Activated CD4-positive, alpha-beta memory T cell treated with anti-CD3 and anti-CD28 coated beads for 36 hours (primary cell): ENCODE measurements at regions of chr13 and their contacts with region 1.

Region 1: DNA sequence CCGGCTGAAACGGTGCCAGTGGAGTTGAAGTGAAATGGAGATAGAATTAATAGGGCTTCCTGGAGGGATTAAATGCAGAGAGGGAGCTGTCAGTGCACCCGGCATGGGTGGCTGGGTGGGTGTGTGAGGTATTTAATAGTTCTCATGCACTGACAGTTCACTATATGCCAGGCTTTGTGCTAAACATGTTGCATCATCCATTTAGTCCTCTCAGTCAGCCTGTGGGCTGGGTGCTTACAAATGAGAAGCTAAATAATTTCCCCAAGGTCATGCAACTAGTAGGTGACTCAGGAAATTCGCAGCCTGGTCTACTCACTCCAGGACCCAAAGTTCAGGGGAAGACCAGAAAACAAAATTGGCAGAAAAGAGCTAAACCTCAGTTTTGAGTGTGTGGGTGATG is 63.5 kb upstream of the SPATA13 start:
- DNase-seq: peak; percentile 75
- H3K4me3 Mint-ChIP-seq: no peak overlapping the region
- H3K27ac Mint-ChIP-seq: peak overlapping the region; percentile 76
- H3K4me1 Mint-ChIP-seq: peaks cover 17% of the 10 kb centered on the region
- H3K27me3 Mint-ChIP-seq: peaks cover 19% of the 10 kb centered on the region

Region 2: DNA sequence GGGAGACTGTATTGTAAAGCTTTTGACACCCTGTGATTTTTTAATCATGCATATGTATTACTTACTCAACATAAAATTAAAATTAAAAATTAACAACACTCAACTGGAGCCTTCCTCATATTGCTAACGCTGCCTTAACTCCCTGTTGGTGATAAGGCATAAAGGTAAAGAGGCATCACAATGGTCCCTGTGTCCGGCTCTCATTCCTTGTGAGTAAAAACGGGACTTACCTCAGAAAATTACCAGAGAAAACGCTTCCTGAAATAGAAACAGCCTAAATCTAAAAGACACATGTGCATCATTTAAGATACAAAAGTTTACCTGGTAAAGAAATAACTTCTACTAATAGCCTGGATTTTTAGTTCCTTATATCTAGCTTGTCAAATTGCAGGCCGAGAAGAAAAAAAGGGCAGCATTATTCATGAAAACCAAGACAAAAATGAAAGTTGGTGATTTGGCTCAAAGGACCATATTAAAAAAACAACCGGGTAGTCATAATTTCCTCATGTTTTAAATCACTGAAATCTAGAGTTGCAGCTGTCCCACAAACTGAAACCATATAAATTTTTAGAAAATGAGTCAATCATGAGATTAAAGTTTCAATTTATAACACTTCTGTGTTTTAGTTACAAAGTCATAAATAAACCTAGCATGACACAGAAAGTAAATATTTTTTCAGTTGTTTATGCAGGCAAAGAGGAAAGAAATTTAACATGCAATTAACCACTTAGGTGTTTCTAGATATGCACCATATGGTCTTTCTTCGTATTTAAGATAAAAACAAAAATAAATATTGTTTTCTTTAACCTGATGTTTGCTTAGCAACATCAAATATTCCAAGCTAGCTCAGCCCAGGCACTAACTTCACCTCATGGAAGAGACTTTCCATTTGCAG is 302.6 kb before region 1 on chr13:
- CTCF ChIA-PET with region 1: no interaction called
- POLR2A ChIA-PET with region 1: no interaction called
- intact Hi-C with region 1: loop called (anchors 1 kb)
- DNase-seq: no peak
- H3K4me3 Mint-ChIP-seq: no peak overlapping the region
- H3K27ac Mint-ChIP-seq: no peak overlapping the region
- H3K4me1 Mint-ChIP-seq: peaks cover 29% of the 10 kb centered on the region
- H3K27me3 Mint-ChIP-seq: no peaks in the 10 kb centered on the region

Region 3: GRCh38 chr13:24053519-24054251 is 43.4 kb before region 1 on chr13:
- CTCF ChIA-PET with region 1: interaction called, 12 read pairs
- POLR2A ChIA-PET with region 1: no interaction called
- intact Hi-C with region 1: loop called (anchors 2 kb)
- DNase-seq: peak; percentile 78
- H3K4me3 Mint-ChIP-seq: no peak overlapping the region
- H3K27ac Mint-ChIP-seq: no peak overlapping the region
- H3K4me1 Mint-ChIP-seq: peaks cover 4% of the 10 kb centered on the region
- H3K27me3 Mint-ChIP-seq: peaks cover 27% of the 10 kb centered on the region

Region 4: DNA sequence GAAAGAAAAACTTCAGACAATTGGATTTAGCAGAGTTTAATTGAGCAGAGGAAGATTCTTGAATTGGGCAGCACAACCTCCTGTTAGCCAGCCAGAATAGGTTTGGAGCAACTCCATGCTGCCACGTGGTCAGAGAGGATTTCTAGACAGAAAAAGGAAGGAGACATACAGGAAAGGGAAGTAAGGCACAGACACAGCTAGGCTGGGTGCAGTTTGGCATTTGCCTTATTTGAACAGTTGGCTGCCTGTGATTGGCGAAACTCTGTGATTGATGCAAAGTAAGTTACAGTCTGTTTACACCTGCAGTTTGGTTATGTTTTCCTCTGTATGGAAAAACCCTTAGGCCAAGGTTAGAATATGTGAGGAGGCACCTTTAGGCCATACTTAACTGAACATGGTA is 22.4 kb before region 1 on chr13:
- CTCF ChIA-PET with region 1: no interaction called
- POLR2A ChIA-PET with region 1: no interaction called
- intact Hi-C with region 1: no loop called
- DNase-seq: no peak
- H3K4me3 Mint-ChIP-seq: no peak overlapping the region
- H3K27ac Mint-ChIP-seq: no peak overlapping the region
- H3K4me1 Mint-ChIP-seq: no peaks in the 10 kb centered on the region
- H3K27me3 Mint-ChIP-seq: peaks cover 8% of the 10 kb centered on the region

Region 5: GRCh38 chr13:24160454-24161009 is 63.5 kb after region 1 on chr13 and contains the start of gene SPATA13:
- CTCF ChIA-PET with region 1: interaction called, 6 read pairs
- POLR2A ChIA-PET with region 1: interaction called, 9 read pairs
- intact Hi-C with region 1: loop called (anchors 2 kb)
- DNase-seq: peak; percentile 94
- H3K4me3 Mint-ChIP-seq: peak within 1 kb of the TSS; percentile 83
- H3K27ac Mint-ChIP-seq: no peak within 1 kb of the TSS
- H3K4me1 Mint-ChIP-seq: peaks cover 13% of the 10 kb centered on the region
- H3K27me3 Mint-ChIP-seq: peaks cover 11% of the 10 kb centered on the region
- total RNA-seq, gene SPATA13: 50.3 to 50.8 TPM

Region 6: DNA sequence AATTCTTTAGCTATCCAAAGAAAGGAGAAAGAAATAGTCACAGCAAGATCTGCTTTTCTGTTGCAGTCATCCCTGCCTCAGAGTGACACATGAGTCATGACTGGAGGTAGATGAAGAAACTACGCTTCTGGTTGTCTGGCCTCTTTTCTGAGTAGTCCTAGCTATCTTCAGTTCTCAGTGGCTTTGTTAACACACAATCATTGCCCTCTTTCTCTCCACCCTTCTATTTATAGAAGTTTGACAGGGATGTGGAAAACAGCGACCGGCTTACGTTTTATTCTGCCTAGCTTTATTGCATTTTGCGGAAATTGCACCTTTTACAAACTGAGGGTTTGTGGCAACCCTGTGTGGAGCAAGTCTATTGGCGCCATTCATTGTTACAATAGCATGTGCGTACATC is 90.1 kb after region 1 on chr13:
- CTCF ChIA-PET with region 1: interaction called, 13 read pairs
- POLR2A ChIA-PET with region 1: interaction called, 11 read pairs
- intact Hi-C with region 1: no loop called
- DNase-seq: peak; percentile 32
- H3K4me3 Mint-ChIP-seq: no peak overlapping the region
- H3K27ac Mint-ChIP-seq: peak overlapping the region; percentile 18
- H3K4me1 Mint-ChIP-seq: peaks cover 24% of the 10 kb centered on the region
- H3K27me3 Mint-ChIP-seq: no peaks in the 10 kb centered on the region

Region 7: GRCh38 chr13:24512197-24512907 is 415.3 kb after region 1 on chr13 and contains the start of gene PARP4:
- CTCF ChIA-PET with region 1: no interaction called
- POLR2A ChIA-PET with region 1: no interaction called
- intact Hi-C with region 1: loop called (anchors 1 kb)
- DNase-seq: peak; percentile 80
- H3K4me3 Mint-ChIP-seq: peak within 1 kb of the TSS; percentile 76
- H3K27ac Mint-ChIP-seq: peak within 1 kb of the TSS; percentile 94
- H3K4me1 Mint-ChIP-seq: peaks cover 28% of the 10 kb centered on the region
- H3K27me3 Mint-ChIP-seq: no peaks in the 10 kb centered on the region
- total RNA-seq, gene PARP4: 20.7 to 22.2 TPM

Region 8: GRCh38 chr13:25111585-25111956 is 1014.5 kb after region 1 on chr13:
- CTCF ChIA-PET with region 1: no interaction called
- POLR2A ChIA-PET with region 1: no interaction called
- intact Hi-C with region 1: no loop called
- DNase-seq: no peak
- H3K4me3 Mint-ChIP-seq: no peak overlapping the region
- H3K27ac Mint-ChIP-seq: no peak overlapping the region
- H3K4me1 Mint-ChIP-seq: no peaks in the 10 kb centered on the region
- H3K27me3 Mint-ChIP-seq: peaks cover 13% of the 10 kb centered on the region